ENCODE measurements at regions of chr1 and their contacts with region 1.

Region 1: DNA sequence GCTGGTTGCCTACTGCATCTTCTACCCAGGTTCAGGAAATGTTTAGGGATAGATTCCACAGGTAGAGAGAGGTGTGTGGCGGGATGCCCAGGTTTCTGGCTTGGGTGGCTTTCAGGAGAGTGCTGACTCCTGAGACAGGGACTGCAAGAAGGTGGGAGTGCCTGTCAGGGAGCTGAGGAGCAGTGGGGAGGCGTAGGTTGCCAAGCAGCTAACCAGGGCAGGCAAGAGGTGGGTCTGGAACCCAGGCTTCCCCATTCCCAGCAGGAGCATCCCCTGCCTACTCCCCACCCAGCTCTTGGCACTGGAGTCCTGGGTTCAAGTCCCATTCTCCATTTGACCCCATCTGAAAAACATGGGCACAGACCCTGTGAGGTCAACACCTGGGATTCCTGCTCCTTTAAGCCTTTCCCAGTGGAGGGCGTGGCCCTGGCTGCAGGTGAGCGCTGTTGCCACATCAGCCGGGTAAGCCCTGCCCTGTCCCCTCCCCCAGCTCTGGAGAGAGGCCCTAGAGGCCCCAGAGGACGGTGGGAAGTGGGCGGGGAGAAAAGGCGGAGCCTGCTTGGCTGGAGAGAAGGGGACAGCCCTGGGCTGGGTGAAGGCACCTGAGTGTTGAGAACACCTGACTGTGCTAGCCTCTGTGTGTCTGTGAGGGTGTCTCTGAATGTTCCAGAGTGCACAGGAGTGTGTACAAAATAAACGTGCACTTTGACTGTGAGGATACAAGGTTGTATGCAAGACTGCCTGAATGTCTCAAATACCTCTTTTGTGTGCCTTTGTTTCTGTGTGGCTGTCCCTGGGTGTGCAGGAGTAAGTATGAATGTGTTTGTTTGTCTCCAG is 14.0 kb upstream of the SYNC start:
- DNase-seq: peak; percentile 99
- H3K4me3 Mint-ChIP-seq: peak overlapping the region; percentile 10
- H3K27ac Mint-ChIP-seq: peak overlapping the region; percentile 75
- H3K4me1 Mint-ChIP-seq: peaks cover 21% of the 10 kb centered on the region
- H3K27me3 Mint-ChIP-seq: no peaks in the 10 kb centered on the region
- CTCF ChIP-seq: no peak

Region 2: GRCh38 chr1:32729254-32730046 is 12.9 kb after region 1 on chr1:
- CTCF ChIA-PET with region 1: interaction called, 15 read pairs
- intact Hi-C with region 1: no loop called
- DNase-seq: no peak
- H3K4me3 Mint-ChIP-seq: no peak overlapping the region
- H3K27ac Mint-ChIP-seq: no peak overlapping the region
- H3K4me1 Mint-ChIP-seq: peaks cover 13% of the 10 kb centered on the region
- H3K27me3 Mint-ChIP-seq: no peaks in the 10 kb centered on the region
- CTCF ChIP-seq: no peak

Region 3: GRCh38 chr1:32753532-32754312 is 37.2 kb after region 1 on chr1:
- CTCF ChIA-PET with region 1: interaction called, 33 read pairs
- intact Hi-C with region 1: no loop called
- DNase-seq: peak; percentile 93
- H3K4me3 Mint-ChIP-seq: peak overlapping the region; percentile 92
- H3K27ac Mint-ChIP-seq: peak overlapping the region; percentile 79
- H3K4me1 Mint-ChIP-seq: peaks cover 55% of the 10 kb centered on the region
- H3K27me3 Mint-ChIP-seq: no peaks in the 10 kb centered on the region
- CTCF ChIP-seq: no peak

Region 4: GRCh38 chr1:32761253-32761880 is 44.8 kb after region 1 on chr1:
- CTCF ChIA-PET with region 1: interaction called, 33 read pairs
- intact Hi-C with region 1: no loop called
- DNase-seq: peak; percentile 90
- H3K4me3 Mint-ChIP-seq: peak overlapping the region; percentile 68
- H3K27ac Mint-ChIP-seq: peak overlapping the region; percentile 99
- H3K4me1 Mint-ChIP-seq: peaks cover 86% of the 10 kb centered on the region
- H3K27me3 Mint-ChIP-seq: no peaks in the 10 kb centered on the region
- CTCF ChIP-seq: no peak

Region 5: GRCh38 chr1:32773018-32773763 is 56.7 kb after region 1 on chr1:
- CTCF ChIA-PET with region 1: interaction called, 102 read pairs
- intact Hi-C with region 1: loop called (anchors 1 kb)
- DNase-seq: peak; percentile 90
- H3K4me3 Mint-ChIP-seq: peak overlapping the region; percentile 38
- H3K27ac Mint-ChIP-seq: peak overlapping the region; percentile 79
- H3K4me1 Mint-ChIP-seq: peaks cover 35% of the 10 kb centered on the region
- H3K27me3 Mint-ChIP-seq: no peaks in the 10 kb centered on the region
- CTCF ChIP-seq: peak; percentile 93

Region 6: GRCh38 chr1:32786856-32787255 is 70.3 kb after region 1 on chr1:
- CTCF ChIA-PET with region 1: interaction called, 5 read pairs
- intact Hi-C with region 1: loop called (anchors 1 kb)
- DNase-seq: no peak
- H3K4me3 Mint-ChIP-seq: no peak overlapping the region
- H3K27ac Mint-ChIP-seq: no peak overlapping the region
- H3K4me1 Mint-ChIP-seq: peaks cover 6% of the 10 kb centered on the region
- H3K27me3 Mint-ChIP-seq: no peaks in the 10 kb centered on the region
- CTCF ChIP-seq: peak; percentile 22